SK-N-SH (cell line): ENCODE measurements at regions of chr1 and their contacts with region 1.

Region 1: DNA sequence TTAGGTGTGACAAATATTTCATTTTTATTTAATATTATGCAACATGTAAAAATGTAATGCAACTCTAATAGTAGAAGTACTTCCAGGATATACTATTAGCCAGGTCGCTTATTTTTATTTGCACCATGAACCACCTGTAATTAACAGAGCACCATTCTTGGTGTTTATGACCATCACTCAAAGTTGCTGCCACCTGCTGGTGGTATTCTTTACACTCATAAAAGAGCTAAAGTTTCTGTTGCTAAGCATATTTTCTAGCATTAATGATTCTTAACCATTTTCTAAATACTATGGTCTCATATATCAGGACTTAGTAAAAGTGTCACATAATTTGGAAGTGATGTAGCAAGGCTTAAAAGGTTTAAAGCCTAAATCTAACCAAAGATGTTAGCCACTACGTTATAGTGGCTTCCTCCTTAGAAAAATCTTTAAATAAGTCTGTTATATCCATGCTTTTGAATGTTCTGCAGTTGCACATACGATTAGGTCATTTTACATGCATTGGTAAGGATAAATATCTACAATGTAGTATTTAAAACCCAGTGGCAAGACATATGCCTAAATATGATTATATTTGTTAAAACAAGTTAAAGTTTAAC is 244.5 kb downstream of the NEGR1 start:
- DNase-seq: no peak
- H3K4me3 ChIP-seq: no peak overlapping the region; a peak in 1 of 4 replicates
- H3K27ac ChIP-seq: no peak overlapping the region
- H3K4me1 ChIP-seq: no peaks in the 10 kb centered on the region
- H3K27me3 ChIP-seq: no peaks in the 10 kb centered on the region
- CTCF ChIP-seq: peak; percentile 77
- EP300 ChIP-seq: no peak
- RAD21 ChIP-seq: peak; percentile 70

Region 2: GRCh38 chr1:71093938-71094337 is 943.9 kb before region 1 on chr1:
- CTCF ChIA-PET with region 1: interaction called, 13 read pairs
- POLR2A ChIA-PET with region 1: no interaction called
- DNase-seq: peak; percentile 15
- H3K4me3 ChIP-seq: no peak overlapping the region
- H3K27ac ChIP-seq: no peak overlapping the region
- H3K4me1 ChIP-seq: peaks cover 0 to 13% of the 10 kb centered on the region in 2 experiments; a peak in 1 of 4 replicates
- H3K27me3 ChIP-seq: no peaks in the 10 kb centered on the region
- CTCF ChIP-seq: peak; percentile 60
- EP300 ChIP-seq: no peak
- RAD21 ChIP-seq: peak; percentile 77

Region 3: DNA sequence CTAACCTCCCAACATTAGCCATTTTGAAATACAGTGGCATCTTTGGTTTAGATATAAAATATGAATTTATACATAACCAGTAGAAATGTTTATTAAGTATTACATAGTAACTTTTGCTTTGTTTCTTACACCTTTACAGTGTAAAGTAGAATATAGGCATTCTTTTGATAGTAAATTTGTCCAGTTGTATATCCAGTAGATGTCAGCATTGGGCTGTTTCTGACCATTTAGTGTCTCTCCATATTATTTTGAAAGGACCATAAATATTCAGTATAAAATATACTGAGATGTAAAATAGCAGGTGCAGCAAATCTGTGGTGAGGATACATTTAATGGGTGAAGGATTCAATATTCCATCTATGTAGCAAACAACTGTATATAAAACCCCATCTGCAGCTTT is 841.2 kb before region 1 on chr1:
- CTCF ChIA-PET with region 1: interaction called, 17 read pairs
- POLR2A ChIA-PET with region 1: no interaction called
- DNase-seq: peak; percentile 22
- H3K4me3 ChIP-seq: no peak overlapping the region
- H3K27ac ChIP-seq: no peak overlapping the region
- H3K4me1 ChIP-seq: no peaks in the 10 kb centered on the region
- H3K27me3 ChIP-seq: no peaks in the 10 kb centered on the region
- CTCF ChIP-seq: peak; percentile 59
- EP300 ChIP-seq: no peak
- RAD21 ChIP-seq: peak; percentile 75

Region 4: GRCh38 chr1:71587961-71588360 is 449.9 kb before region 1 on chr1:
- CTCF ChIA-PET with region 1: interaction called, 55 read pairs
- POLR2A ChIA-PET with region 1: no interaction called
- DNase-seq: no peak
- H3K4me3 ChIP-seq: no peak overlapping the region
- H3K27ac ChIP-seq: no peak overlapping the region
- H3K4me1 ChIP-seq: no peaks in the 10 kb centered on the region; a peak in 1 of 4 replicates
- H3K27me3 ChIP-seq: no peaks in the 10 kb centered on the region
- CTCF ChIP-seq: peak; percentile 48
- EP300 ChIP-seq: no peak
- RAD21 ChIP-seq: peak; percentile 81

Region 5: DNA sequence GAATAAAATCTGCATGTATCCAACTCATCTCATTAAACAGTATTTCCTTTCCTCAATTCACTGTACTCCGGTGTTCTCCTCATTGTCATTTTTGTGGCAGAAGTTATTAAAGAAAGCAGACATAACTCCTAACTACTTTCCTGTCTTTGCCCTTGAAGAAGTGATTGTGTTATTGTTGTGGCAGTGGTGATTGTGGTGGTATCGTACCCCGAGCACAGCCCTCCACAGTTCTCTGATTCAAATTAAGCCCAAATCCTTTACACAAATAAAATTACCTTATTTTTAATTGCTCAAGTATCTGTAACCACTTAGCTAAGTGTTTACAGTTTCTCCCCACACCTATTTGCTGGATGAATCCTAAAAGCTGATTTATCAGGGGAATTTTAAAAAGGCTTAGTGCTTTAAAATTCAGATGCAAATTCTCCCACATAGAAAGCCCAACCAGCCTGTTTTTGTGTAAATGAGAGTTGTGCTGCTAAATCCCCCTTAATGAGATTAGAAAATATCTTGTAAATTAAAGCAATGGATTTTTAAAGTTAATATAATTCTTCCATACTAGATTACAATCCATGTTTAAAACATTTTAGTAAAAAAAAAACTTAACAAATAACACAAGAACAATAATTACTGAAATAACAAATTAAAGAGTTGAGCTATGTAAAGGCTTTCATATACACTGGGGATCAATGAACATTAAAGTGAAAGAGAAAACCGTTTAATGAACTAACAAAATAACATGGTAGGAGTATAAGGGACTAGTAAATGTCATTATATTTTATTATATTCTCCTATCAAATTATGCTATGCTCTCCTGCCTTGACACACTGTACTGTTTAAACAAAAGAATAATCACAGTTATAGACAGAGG is 14.5 kb before region 1 on chr1:
- CTCF ChIA-PET with region 1: interaction called, 13 read pairs
- POLR2A ChIA-PET with region 1: no interaction called
- DNase-seq: no peak
- H3K4me3 ChIP-seq: no peak overlapping the region
- H3K27ac ChIP-seq: no peak overlapping the region
- H3K4me1 ChIP-seq: peaks cover 0 to 5% of the 10 kb centered on the region in 2 experiments; a peak in 1 of 4 replicates
- H3K27me3 ChIP-seq: no peaks in the 10 kb centered on the region
- CTCF ChIP-seq: no peak
- EP300 ChIP-seq: no peak
- RAD21 ChIP-seq: no peak

Region 6: GRCh38 chr1:72051538-72051937 is 13.7 kb after region 1 on chr1:
- CTCF ChIA-PET with region 1: interaction called, 16 read pairs
- POLR2A ChIA-PET with region 1: no interaction called
- DNase-seq: no peak
- H3K4me3 ChIP-seq: no peak overlapping the region
- H3K27ac ChIP-seq: no peak overlapping the region
- H3K4me1 ChIP-seq: no peaks in the 10 kb centered on the region; a peak in 1 of 4 replicates
- H3K27me3 ChIP-seq: no peaks in the 10 kb centered on the region
- CTCF ChIP-seq: no peak
- EP300 ChIP-seq: no peak
- RAD21 ChIP-seq: no peak